ENCODE measurements at regions of chr7 and their contacts with region 1.

Region 1: DNA sequence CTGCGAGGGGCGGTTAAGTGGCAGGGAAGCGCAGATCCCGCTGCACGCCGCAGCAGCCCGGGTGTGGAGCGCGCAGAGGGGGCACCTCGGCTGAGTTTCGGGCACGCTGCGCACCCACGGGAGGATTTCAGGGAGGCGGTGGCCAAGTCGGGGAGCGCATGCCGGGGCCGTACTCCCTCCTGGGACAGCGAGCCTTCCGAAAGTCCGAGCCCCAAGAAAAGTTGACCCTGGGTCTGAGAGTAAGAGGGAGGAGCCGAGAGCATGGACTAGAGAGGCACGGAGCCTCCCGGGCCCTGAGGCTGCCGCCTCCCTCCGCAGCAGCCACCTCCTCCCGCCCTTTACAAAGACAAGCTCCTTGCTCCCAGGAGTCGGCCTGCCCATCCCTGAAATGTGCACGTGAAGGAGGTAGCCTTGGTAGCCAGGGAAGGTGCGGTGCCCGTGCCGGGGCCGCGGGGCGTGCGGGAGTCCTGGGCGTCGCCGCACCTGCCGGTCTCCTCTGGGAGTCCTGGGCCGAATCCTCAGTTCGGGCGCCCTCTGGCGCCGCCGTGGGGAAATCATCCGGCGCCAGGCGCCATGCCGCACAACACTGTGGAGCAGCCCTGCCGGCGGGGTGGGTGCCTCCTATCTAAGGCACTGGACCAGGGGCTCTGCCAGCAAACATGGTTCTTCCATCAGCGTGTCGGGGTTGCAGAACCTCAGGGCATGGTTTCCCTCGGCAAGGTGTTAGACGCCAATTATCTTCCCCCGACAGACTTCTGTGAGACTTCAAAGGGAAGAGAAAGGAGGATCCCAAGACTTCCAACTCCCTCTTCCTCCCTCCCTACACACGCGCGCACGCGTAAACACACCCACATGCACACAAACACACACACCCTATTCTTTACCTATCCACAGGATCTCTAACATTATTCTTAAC is 104.0 kb downstream of the TRIL start:
- DNase-seq: peak; percentile 91
- CTCF ChIP-seq: peak; percentile 94

Region 2: DNA sequence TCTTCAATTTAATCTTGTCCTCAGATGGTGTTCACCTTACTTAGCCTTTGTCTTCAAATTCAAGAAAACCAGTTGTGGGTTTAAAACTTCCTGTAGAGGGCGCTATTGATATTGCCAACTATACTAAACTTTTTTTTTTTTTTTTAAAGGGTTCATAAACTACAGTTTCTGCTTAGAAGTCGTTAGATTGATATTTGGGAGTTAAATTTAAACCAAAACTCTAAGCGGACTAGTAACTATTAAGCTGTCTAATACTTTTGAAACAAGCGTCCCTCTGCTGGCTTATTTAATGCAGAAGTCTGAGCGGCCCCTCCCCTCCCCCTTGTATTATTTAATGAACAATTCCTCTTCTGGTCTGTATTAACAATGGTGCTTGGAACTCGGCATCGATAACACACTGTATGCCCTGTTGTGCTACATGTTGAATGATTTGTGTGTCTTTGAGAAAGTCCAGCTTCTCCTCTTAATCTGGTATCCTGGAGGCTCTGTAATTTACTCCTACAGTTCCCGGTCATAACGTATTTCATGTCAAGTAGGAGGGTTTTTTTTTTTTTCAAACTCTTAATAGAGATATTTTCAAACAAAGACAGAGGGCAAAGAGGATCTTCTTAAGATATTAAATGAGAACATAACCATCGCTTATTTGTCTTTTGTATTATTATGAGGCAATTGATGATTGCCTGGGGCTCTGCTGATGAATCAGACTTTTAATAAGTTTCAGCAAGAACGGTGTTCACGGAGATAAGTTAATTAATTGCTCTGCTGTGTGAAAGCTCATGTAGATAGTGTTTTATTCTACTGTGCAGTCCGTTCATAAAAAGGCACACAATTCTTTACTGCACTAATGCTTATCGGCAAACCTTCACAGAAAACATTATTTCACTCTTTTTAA is 464.3 kb before region 1 on chr7:
- in situ Hi-C with region 1: loop called (anchors 25 kb)
- DNase-seq: no peak
- CTCF ChIP-seq: peak; percentile 43

Region 3: GRCh38 chr7:28509251-28510022 is 344.7 kb before region 1 on chr7:
- in situ Hi-C with region 1: no loop called
- DNase-seq: peak; percentile 61
- CTCF ChIP-seq: no peak

Region 4: DNA sequence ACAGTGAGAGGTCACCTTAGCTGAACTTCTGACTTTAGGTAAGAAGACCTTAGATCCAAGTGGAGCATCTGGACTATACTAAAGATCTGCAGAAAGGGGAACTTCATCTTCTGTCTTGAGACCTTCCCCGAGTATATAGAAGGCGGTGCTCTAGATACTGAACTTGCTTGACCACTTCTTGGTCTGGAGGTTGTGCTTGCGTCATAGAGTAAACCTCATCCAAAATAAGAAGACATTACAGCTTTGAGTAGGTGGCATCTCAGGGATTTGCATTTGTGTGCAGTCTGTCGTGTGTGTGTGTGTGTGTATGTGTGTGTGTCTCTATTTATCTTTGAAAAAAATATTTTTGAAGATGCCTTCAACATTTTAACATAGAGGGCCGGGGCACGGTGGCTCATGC is 498.0 kb after region 1 on chr7:
- in situ Hi-C with region 1: no loop called
- DNase-seq: no peak
- CTCF ChIP-seq: no peak

Measured in GM13977 (cell line).